Left ventricle myocardium superior (tissue), 1 donor: ENCODE measurements at regions of chr17 and their contacts with region 1.

Region 1: GRCh38 chr17:12118617-12119016 is 97.9 kb downstream of the MAP2K4 start:
- DNase-seq: no peak
- ATAC-seq: no peak

Region 2: GRCh38 chr17:12020642-12021622 is 97.7 kb before region 1 on chr17 and contains the start of gene MAP2K4:
- intact Hi-C with region 1: loop called (anchors 10 kb)
- DNase-seq: peak; percentile 96
- ATAC-seq: peak; percentile 100
- total RNA-seq, gene MAP2K4: 30.2 TPM

Region 3: DNA sequence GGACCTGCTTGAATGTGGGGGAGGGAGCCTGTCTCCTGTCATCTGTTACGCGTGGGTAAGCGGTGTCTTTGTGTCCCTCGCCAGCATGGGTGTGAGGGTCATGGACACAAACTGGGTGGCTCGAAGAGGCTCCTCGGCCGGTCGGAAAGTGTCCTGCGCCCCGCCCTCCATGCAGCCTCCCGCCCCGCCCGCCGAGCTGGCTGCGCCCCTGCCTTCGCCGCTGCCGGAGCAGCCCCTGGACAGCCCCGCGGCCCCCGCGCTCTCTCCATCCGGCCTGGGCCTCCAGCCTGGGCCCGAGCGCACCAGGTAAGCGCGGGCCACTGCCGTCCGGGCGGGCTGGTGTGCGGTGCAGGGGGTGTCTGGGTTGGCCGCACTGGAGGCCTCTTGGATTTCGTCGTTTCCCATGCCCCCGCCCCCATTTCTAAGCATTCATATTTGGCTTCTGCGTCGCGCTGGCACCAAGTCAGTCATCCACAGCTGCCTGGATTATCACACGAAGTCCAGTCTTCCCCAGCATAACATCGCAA is 855.5 kb after region 1 on chr17:
- intact Hi-C with region 1: no loop called
- DNase-seq: peak; percentile 43
- ATAC-seq: peak; percentile 78